ENCODE measurements at regions of chr12 and their contacts with region 1.

Region 1: GRCh38 chr12:21683115-21683514 is 25.5 kb upstream of the LDHB start:
- DNase-seq: no peak

Region 2: GRCh38 chr12:21248679-21249078 is 434.4 kb before region 1 on chr12:
- intact Hi-C with region 1: loop called (anchors 5 kb)
- DNase-seq: no peak

Region 3: GRCh38 chr12:21559855-21560569 is 123.1 kb before region 1 on chr12:
- intact Hi-C with region 1: no loop called
- DNase-seq: no peak

Region 4: DNA sequence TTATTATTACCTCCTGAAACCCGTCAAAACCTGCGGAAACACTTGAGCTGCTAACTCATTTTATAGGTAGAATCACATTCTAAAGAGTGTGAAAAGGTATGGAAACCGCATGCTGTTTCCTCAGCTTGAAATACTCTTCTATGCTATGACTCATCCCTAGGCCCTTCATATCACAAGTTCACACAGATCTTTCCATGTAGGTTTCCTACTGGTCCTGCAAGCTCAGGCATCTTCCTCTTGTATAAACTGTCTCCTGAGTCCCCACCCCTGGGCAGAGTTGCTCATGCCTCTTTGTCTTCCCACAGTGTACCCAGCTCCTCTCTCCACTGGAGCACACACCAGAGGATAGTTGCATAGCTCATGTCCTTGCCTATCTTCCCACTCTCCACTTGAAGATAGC is 447.6 kb after region 1 on chr12:
- intact Hi-C with region 1: no loop called
- DNase-seq: no peak

Measured in posterior cingulate gyrus (tissue), 11 donors.